T-cell (primary cell): ENCODE measurements at regions of chr10 and their contacts with region 1.

Region 1: DNA sequence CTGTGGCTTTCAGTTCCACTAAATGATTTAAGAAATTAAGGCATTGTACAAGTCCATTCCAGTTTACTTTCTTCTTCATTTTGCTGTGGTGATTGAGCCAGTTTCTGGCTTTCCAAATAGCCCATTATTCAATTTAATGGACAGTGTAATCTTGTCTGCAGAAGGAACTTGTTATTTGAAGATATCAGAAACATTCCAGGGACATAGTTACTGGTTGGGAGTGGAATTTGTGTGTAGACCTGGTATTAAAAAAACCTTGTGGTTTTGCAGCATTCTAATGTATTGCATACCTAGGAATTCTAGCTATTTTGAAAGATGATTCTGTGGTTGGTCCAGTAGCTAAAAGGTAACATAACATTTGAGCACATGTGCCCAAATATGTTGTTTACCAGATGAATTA is 72.2 kb downstream of the MCU start:
- DNase-seq: no peak
- ATAC-seq: no peak
- H3K4me3 ChIP-seq: no peak overlapping the region
- H3K4me3 Mint-ChIP-seq: no peak overlapping the region
- H3K27ac ChIP-seq: no peak overlapping the region
- H3K27ac Mint-ChIP-seq: no peak overlapping the region
- H3K4me1 ChIP-seq: no peaks in the 10 kb centered on the region
- H3K4me1 Mint-ChIP-seq: no peaks in the 10 kb centered on the region
- H3K27me3 ChIP-seq: no peaks in the 10 kb centered on the region
- H3K27me3 Mint-ChIP-seq: no peaks in the 10 kb centered on the region

Region 2: DNA sequence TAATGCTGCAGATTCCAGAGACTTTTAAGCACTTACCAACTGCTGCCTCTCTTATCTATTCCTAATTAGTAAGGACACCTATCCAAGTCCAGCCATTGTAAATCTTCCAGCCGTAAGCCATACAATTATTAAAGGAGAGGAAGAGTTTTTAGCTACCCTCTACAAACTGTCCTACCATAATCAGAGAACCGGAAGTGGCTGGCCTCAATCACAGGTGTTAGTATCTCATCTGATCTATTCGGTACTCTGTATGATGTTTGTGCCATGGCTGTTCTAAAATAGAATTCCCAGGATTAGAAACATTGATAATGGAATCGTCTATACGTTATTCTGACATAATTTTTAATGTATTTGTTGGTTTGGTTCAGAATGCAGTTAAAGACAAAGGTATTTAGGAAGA is 241.1 kb before region 1 on chr10:
- CTCF ChIA-PET with region 1: no interaction called
- POLR2A ChIA-PET with region 1: interaction called in 1 of 2 experiments, 13 read pairs
- DNase-seq: no peak
- ATAC-seq: no peak
- H3K4me3 ChIP-seq: no peak overlapping the region
- H3K4me3 Mint-ChIP-seq: no peak overlapping the region
- H3K27ac ChIP-seq: no peak overlapping the region
- H3K27ac Mint-ChIP-seq: no peak overlapping the region
- H3K4me1 ChIP-seq: no peaks in the 10 kb centered on the region
- H3K4me1 Mint-ChIP-seq: no peaks in the 10 kb centered on the region
- H3K27me3 ChIP-seq: no peaks in the 10 kb centered on the region
- H3K27me3 Mint-ChIP-seq: no peaks in the 10 kb centered on the region